ENCODE measurements at regions of chr1 and their contacts with region 1.

Region 1: GRCh38 chr1:53992085-53992874 is 25.7 kb downstream of the LDLRAD1 start:
- DNase-seq: peak in 1 of 4 experiments; percentile 35
- ATAC-seq: peak; percentile 92
- H3K4me3 ChIP-seq: no peak overlapping the region
- H3K27ac ChIP-seq: no peak overlapping the region
- H3K4me1 ChIP-seq: 0 out of 5 replicates have a peak, but pooled peaks cover 0 to 5% of the 10 kb centered on the region in 2 experiments
- H3K27me3 ChIP-seq: peaks cover 2 to 13% of the 10 kb centered on the region in 2 experiments; a peak in 2 of 5 replicates
- CTCF ChIP-seq: peak; percentile 41 to 51 (median 49)
- EP300 ChIP-seq: no peak
- POLR2A ChIP-seq: no peak
- RAD21 ChIP-seq: peak in 1 of 2 experiments; percentile 60; a peak in 2 of 4 replicates

Region 2: GRCh38 chr1:53982034-53982762 is 10.1 kb before region 1 on chr1:
- CTCF ChIA-PET with region 1: no interaction called
- POLR2A ChIA-PET with region 1: interaction called, 10 read pairs
- in situ Hi-C with region 1: no loop called
- intact Hi-C with region 1: no loop called
- DNase-seq: peak in 2 of 4 experiments; percentile 32 to 36
- ATAC-seq: peak; percentile 60
- H3K4me3 ChIP-seq: 0 out of 2 replicates have a peak overlapping the region, but pooled peaks have one; percentile 6
- H3K27ac ChIP-seq: peak overlapping the region; percentile 40; the same call in 2 of the 3 replicates
- H3K4me1 ChIP-seq: peaks cover 4 to 9% of the 10 kb centered on the region in 2 experiments; a peak in 4 of 5 replicates
- H3K27me3 ChIP-seq: no peaks in the 10 kb centered on the region
- CTCF ChIP-seq: no peak
- EP300 ChIP-seq: no peak
- POLR2A ChIP-seq: no peak
- RAD21 ChIP-seq: no peak